Calu3 (cell line): ENCODE measurements at regions of chr1 and their contacts with region 1.

Region 1: GRCh38 chr1:116139592-116140134 is 28.5 kb downstream of the MAB21L3 start:
- DNase-seq: no peak
- H3K4me3 Mint-ChIP-seq: no peak overlapping the region
- H3K27ac Mint-ChIP-seq: no peak overlapping the region
- H3K4me1 Mint-ChIP-seq: peaks cover 9% of the 10 kb centered on the region
- H3K27me3 Mint-ChIP-seq: no peaks in the 10 kb centered on the region
- CTCF ChIP-seq: no peak

Region 2: DNA sequence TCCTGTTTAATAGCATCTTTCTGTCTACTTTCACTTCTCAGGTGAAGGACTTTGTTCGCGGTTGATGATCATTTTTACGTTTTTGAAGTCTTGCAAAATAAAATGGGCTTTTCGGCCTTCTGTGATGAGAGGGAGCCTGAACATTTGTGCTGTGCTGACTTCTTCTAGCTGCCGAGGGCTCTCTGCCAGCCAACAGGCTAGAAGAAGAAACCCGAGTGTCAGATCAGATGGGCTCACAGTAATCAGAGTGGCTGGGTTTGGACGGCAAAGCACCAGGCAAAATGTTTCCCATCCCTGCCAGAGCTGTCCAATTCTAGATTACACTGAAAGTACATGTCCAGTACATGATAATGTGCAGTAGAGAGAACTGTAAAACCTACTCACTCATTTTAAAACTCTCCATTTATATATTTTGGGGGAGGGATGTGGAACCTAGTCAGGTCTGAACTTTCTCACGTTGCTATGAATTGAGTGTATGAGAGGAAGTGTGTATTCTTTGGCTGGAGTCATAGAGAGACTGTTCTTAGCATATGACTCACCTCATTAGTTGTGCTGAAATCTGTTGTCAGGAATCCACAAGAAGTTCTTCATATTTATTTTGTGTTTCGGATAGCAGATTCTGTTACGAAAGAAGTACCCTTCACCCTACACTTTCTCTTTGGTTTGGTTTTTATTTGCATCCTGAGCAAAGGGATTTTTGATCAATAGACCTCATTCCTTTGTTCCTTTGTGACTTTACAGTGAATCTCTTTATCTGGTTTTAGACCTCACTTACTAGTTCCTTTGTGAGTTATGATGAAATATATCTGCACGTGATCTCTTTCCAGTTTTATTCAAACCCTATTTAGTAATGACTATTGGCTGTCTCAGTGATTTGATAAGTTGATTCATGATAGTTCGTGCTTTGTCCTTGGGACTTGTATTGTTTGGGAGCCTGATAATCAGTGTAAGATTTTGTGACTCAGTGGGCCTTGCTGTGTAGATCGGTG is 238.2 kb after region 1 on chr1:
- CTCF ChIA-PET with region 1: interaction called, 3 read pairs
- intact Hi-C with region 1: loop called (anchors 5 kb)
- DNase-seq: no peak
- H3K4me3 Mint-ChIP-seq: peak overlapping the region; percentile 79
- H3K27ac Mint-ChIP-seq: peak overlapping the region; percentile 72
- H3K4me1 Mint-ChIP-seq: peaks cover 36% of the 10 kb centered on the region
- H3K27me3 Mint-ChIP-seq: no peaks in the 10 kb centered on the region
- CTCF ChIP-seq: no peak

Region 3: GRCh38 chr1:116498789-116499628 is 359.3 kb after region 1 on chr1:
- CTCF ChIA-PET with region 1: interaction called, 93 read pairs
- intact Hi-C with region 1: loop called (anchors 2 kb)
- DNase-seq: peak; percentile 75
- H3K4me3 Mint-ChIP-seq: no peak overlapping the region
- H3K27ac Mint-ChIP-seq: no peak overlapping the region
- H3K4me1 Mint-ChIP-seq: peaks cover 62% of the 10 kb centered on the region
- H3K27me3 Mint-ChIP-seq: no peaks in the 10 kb centered on the region
- CTCF ChIP-seq: peak; percentile 80

Region 4: DNA sequence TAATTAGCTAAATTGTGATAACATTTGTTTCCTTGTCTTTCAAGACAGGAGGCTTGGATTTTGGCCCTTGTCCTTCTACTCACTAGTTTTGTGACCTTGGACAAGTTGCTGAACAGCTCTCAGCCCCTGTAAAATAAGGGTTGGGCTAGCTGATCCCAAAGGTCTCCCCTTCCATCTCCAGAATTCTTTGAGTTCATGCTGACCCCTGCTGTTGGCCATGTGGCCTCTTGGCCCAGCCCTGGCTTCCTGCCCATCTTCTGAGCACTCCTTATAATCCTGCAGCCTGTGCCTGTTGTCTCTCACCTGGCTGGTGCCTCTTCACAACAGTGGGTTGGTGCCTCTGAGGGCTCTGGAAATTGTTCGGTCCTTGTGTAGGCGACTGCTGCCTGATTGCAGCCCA is 780.1 kb after region 1 on chr1:
- CTCF ChIA-PET with region 1: no interaction called
- intact Hi-C with region 1: no loop called
- DNase-seq: no peak
- H3K4me3 Mint-ChIP-seq: no peak overlapping the region
- H3K27ac Mint-ChIP-seq: no peak overlapping the region
- H3K4me1 Mint-ChIP-seq: peaks cover 11% of the 10 kb centered on the region
- H3K27me3 Mint-ChIP-seq: no peaks in the 10 kb centered on the region
- CTCF ChIP-seq: no peak